ENCODE measurements at regions of chr19 and their contacts with region 1.

Region 1: DNA sequence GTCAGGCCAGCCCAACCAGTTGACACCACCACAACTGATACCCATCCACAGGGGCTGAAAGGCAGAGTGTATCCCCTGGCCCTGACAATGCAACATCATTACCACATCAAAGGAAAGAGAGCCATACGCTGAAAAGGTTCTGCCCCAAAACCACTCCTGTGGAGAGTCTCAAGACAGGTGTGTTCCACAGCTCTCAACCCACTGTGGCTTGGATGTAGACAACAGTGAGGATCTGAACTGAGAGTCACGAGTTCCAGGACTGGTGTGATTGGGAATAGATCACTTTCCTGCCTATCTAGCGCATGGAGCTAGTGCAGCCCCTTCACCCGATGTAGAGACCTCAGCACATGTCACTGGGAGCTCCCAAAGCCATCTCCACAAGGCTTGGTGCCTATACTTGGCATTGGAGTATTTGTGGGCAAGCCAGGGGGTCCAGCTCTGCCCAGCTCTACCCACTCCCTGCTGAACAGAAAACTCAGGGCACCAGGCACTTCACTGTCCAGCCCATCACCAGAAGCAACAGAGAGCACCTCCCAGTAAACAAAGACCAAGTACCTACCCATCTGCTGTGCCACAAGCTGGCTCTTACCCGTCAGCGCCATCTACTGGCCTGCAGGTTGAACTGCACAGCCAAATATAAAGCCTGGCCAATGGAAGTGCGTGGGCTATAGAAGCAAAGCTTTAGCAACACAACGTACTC is 579.5 kb downstream of the UQCRFS1 start:
- DNase-seq: peak; percentile 76
- H3K4me3 ChIP-seq: no peak overlapping the region
- H3K27ac ChIP-seq: peak overlapping the region; percentile 86
- H3K4me1 ChIP-seq: peaks cover 40% of the 10 kb centered on the region
- CTCF ChIP-seq: peak; percentile 99

Region 2: GRCh38 chr19:28242297-28242927 is 391.1 kb before region 1 on chr19:
- CTCF ChIA-PET with region 1: no interaction called
- POLR2A ChIA-PET with region 1: no interaction called
- intact Hi-C with region 1: loop called (anchors 2 kb)
- DNase-seq: peak; percentile 53
- H3K4me3 ChIP-seq: no peak overlapping the region
- H3K27ac ChIP-seq: no peak overlapping the region
- H3K4me1 ChIP-seq: no peaks in the 10 kb centered on the region
- CTCF ChIP-seq: peak; percentile 87

Region 3: GRCh38 chr19:28466107-28467045 is 167.1 kb before region 1 on chr19:
- CTCF ChIA-PET with region 1: interaction called, 6 read pairs
- POLR2A ChIA-PET with region 1: interaction called, 3 read pairs
- intact Hi-C with region 1: loop called (anchors 1 kb)
- DNase-seq: peak; percentile 72
- H3K4me3 ChIP-seq: no peak overlapping the region
- H3K27ac ChIP-seq: no peak overlapping the region
- H3K4me1 ChIP-seq: peaks cover 25% of the 10 kb centered on the region
- CTCF ChIP-seq: peak; percentile 97

Region 4: DNA sequence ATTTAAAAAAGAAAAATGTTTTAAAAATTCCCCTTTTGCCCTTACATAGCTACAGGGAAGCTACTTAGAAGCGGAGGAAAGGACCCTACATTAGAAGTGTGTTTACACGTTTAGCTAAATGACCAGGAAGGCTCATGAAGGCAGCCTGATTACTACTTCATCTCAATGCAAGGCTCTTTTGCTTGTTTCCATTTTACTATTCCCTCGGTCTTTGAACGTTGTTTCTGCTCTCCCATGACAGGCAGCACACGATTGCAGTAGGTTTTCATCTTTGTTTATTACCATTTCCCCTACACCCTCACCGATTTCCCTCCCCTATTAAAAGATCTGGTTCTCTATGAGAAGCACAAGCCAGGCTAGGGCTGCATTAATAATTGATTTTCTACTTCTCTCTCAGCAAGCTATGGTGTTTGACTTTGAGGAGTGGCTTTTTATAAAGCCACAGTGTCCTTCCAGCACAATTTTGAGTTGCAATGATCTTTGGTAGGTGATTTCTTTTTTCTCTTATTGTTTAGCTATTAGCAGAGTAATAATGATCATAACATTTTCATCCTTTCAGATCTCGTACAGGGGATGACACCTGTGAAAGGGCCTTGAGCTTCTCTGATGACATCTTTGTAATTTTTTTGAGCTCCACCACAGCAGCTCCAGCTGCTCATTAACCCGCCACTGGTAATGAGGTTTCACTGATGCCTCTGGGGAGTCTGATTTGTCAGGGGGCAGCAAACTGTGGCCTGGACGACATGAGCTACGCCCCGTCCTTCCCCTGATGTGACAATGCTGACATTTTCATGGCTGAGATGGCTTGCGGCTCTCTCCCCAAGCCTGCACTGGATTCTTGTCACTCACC is 90.8 kb before region 1 on chr19:
- CTCF ChIA-PET with region 1: no interaction called
- POLR2A ChIA-PET with region 1: no interaction called
- intact Hi-C with region 1: loop called (anchors 2 kb)
- DNase-seq: peak; percentile 76
- H3K4me3 ChIP-seq: peak overlapping the region; percentile 17
- H3K27ac ChIP-seq: peak overlapping the region; percentile 69
- H3K4me1 ChIP-seq: peaks cover 30% of the 10 kb centered on the region
- CTCF ChIP-seq: no peak

Region 5: DNA sequence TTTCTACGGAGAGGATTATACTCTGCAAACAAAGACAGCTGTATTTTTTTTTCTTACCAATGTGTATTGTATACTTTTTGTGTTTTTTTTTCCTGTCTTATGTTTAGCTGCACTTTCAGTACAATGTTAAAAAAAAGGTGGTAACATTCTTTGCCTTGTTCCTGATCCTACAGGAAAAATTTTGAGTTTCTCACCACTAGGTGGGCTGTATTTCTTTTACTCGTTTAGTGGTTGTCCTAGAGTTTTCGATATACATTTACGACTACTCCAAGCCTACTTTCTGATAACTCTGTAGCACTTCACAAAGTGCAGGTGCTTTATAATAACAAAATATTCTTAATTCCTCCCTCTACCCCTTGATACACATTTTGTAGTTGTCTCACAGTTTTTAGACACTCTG is 72.7 kb before region 1 on chr19:
- CTCF ChIA-PET with region 1: no interaction called
- POLR2A ChIA-PET with region 1: no interaction called
- intact Hi-C with region 1: no loop called
- DNase-seq: no peak
- H3K4me3 ChIP-seq: no peak overlapping the region
- H3K27ac ChIP-seq: no peak overlapping the region
- H3K4me1 ChIP-seq: no peaks in the 10 kb centered on the region
- CTCF ChIP-seq: 0 out of 2 replicates have a peak, but pooled peaks have one; percentile 31

Region 6: GRCh38 chr19:28586474-28586873 is 47.0 kb before region 1 on chr19:
- CTCF ChIA-PET with region 1: interaction called, 6 read pairs
- POLR2A ChIA-PET with region 1: no interaction called
- intact Hi-C with region 1: loop called (anchors 1 kb)
- DNase-seq: no peak
- H3K4me3 ChIP-seq: no peak overlapping the region
- H3K27ac ChIP-seq: no peak overlapping the region
- H3K4me1 ChIP-seq: peaks cover 66% of the 10 kb centered on the region
- CTCF ChIP-seq: no peak

Region 7: DNA sequence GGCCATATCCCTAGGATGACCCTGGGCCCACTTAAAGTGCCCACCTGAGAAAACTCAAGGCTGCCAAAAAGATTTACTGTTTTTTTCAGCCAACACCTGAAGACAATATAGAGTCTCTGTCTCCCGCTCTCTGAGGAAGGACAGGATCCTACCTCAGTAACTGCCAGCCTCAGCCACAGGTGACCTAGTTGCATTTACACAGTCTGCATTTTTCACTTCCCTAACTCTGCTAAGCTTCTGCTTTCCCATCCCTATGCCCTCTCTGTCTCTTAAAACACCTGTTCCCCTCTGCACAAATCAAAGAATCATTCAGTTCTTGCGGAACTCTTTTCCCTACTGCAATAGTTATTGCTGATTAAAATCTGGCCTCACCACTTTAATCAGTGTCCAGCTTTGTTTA is 30.0 kb before region 1 on chr19:
- CTCF ChIA-PET with region 1: no interaction called
- POLR2A ChIA-PET with region 1: no interaction called
- intact Hi-C with region 1: loop called (anchors 1 kb)
- DNase-seq: peak; percentile 81
- H3K4me3 ChIP-seq: no peak overlapping the region
- H3K27ac ChIP-seq: peak overlapping the region; percentile 72
- H3K4me1 ChIP-seq: peaks cover 54% of the 10 kb centered on the region
- CTCF ChIP-seq: no peak

Measured in OCI-LY7 (cell line).